HCT116 (cell line): ENCODE measurements at regions of chr22 and their contacts with region 1.

Region 1: GRCh38 chr22:45994491-45995404 is 17.8 kb upstream of the WNT7B start:
- DNase-seq: no peak
- ATAC-seq: peak; percentile 94
- H3K4me3 ChIP-seq: no peak overlapping the region
- H3K27ac ChIP-seq: no peak overlapping the region
- H3K4me1 ChIP-seq: no peaks in the 10 kb centered on the region
- H3K27me3 ChIP-seq: no peaks in the 10 kb centered on the region
- CTCF ChIP-seq: peak; percentile 93 to 98 (median 95)
- POLR2A ChIP-seq: no peak
- RAD21 ChIP-seq: peak; percentile 97

Region 2: DNA sequence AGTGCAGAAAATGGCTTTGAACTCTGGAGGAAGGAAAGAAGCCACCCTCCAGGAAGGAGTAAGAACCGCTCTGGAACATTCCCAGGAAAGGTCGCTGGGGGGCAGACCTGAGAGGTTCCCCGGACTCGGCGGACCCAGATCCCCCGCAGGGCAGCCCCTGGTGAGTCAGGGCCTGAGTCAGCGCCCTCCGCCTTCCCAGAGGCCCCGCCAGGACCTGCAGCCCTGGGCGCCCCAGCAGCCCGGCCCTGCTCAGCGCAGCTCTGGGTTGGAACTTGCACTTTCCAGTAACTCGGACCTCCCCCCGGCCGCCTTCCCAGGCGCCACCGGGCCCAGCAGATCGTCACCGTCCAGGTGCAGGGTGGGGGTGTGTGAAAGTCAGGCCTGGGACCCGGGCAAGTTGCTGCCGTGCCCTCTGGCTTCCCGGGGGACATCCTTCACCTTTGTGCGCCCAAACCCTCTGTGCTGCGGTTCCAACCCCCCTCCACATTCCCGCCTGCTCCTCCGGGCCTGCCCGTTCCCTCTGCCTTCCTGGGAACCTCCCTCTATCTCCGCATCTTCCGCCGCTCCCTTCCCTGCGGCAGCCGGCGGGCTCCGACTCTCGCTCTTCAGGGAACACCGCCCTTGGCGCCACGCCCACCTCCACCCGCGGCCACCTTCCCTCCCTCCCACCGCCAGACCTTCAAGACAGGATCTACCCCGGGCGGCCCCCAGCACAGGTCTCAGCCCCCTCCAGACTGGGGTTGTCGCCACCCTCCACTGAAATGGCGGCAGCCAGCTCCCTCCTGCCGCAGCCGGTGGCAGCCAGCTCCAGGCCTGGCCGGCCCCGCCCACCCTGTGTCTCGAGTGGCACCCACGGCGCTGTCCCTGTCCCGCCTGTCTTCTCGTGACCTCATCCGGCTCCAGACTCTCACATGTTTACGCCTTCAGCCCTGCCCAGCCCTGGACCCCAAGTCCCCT is 19.0 kb after region 1 on chr22:
- CTCF ChIA-PET with region 1: no interaction called
- POLR2A ChIA-PET with region 1: no interaction called
- RAD21 ChIA-PET with region 1: no interaction called
- intact Hi-C with region 1: no loop called
- DNase-seq: peak; percentile 89
- ATAC-seq: peak; percentile 95
- H3K4me3 ChIP-seq: peak overlapping the region; percentile 53 to 73
- H3K27ac ChIP-seq: peak overlapping the region; percentile 100
- H3K4me1 ChIP-seq: peaks cover 20 to 33% of the 10 kb centered on the region in 2 experiments
- H3K27me3 ChIP-seq: no peaks in the 10 kb centered on the region
- CTCF ChIP-seq: peak in 2 of 3 experiments; percentile 70 to 77; a peak in 4 of 6 replicates
- POLR2A ChIP-seq: peak; percentile 55
- RAD21 ChIP-seq: no peak

Region 3: GRCh38 chr22:46116491-46116958 is 121.8 kb after region 1 on chr22:
- CTCF ChIA-PET with region 1: interaction called, 17 read pairs
- POLR2A ChIA-PET with region 1: no interaction called
- RAD21 ChIA-PET with region 1: interaction called, 3 to 5 read pairs
- intact Hi-C with region 1: loop called (anchors 1 kb)
- DNase-seq: peak; percentile 66
- ATAC-seq: peak; percentile 84
- H3K4me3 ChIP-seq: no peak overlapping the region
- H3K27ac ChIP-seq: peak overlapping the region; percentile 45; the same call in 1 of the 2 replicates
- H3K4me1 ChIP-seq: peaks cover 4 to 23% of the 10 kb centered on the region in 2 experiments; a peak in 3 of 4 replicates
- H3K27me3 ChIP-seq: no peaks in the 10 kb centered on the region
- CTCF ChIP-seq: peak; percentile 88 to 99 (median 94)
- POLR2A ChIP-seq: no peak
- RAD21 ChIP-seq: peak; percentile 98

Region 4: DNA sequence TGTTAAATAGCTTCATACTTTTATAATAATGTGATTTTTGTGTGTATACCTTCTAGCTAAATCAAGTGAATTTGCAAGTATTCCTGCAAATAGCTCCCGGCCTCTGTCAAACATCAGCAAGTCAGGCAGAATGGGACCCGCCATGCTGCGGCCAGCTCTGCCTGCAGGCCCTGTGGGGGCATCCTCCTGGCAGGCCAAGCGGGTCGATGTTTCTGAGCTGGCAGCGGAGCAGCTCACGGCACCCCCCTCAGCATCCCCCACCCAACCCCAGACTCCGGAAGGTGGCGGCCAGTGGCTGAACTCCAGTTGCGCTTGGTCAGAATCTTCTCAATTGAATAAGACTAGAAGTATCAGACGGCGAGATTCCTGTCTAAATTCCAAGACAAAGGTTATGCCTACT is 321.2 kb after region 1 on chr22:
- CTCF ChIA-PET with region 1: no interaction called
- POLR2A ChIA-PET with region 1: no interaction called
- RAD21 ChIA-PET with region 1: no interaction called
- intact Hi-C with region 1: loop called (anchors 2 kb)
- DNase-seq: no peak
- ATAC-seq: no peak
- H3K4me3 ChIP-seq: no peak overlapping the region
- H3K27ac ChIP-seq: no peak overlapping the region
- H3K4me1 ChIP-seq: no peaks in the 10 kb centered on the region
- H3K27me3 ChIP-seq: no peaks in the 10 kb centered on the region
- CTCF ChIP-seq: no peak
- POLR2A ChIP-seq: no peak
- RAD21 ChIP-seq: no peak